MCF 10A (cell line): ENCODE measurements at regions of chr5 and their contacts with region 1.

Region 1: DNA sequence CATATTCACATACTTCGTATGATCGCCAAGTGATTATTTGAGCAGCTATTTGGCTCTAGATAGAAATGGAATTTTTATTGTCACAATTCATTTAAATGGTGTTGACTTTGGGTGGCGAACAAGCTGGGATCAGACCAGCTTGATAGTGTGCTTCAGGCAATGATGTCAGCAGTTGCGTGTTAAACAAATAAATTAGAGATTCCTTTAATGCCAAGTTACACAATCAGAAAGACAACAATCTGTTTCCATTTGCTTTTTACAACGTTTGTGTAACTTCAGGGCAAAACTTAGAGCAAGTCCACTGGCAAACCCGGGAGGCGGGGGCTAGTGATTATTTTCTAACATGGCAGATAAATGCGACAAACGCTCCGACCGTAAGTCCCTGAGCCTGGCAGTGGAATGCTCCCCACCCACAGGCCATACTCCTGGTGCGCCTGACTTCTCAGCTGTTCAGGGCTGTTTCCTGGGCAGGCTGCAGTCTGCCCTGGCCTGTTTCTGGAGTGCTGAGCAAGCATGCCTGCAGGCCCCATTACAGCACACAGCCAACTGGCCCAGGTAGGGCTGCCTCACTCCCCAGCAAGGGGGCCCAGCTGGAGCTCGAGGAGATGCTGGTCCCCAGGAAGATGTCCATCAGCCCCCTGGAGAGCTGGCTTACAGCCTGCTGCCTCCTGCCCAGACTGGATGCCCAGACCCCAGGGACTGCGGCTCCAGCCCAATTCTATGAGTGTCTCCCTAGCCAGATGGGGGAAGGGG is 88.7 kb downstream of the BASP1 start:
- DNase-seq: peak; percentile 89
- H3K4me3 Mint-ChIP-seq: peak overlapping the region; percentile 33
- H3K27ac Mint-ChIP-seq: peak overlapping the region; percentile 83
- H3K4me1 Mint-ChIP-seq: peaks cover 29% of the 10 kb centered on the region
- H3K27me3 Mint-ChIP-seq: no peaks in the 10 kb centered on the region
- CTCF ChIP-seq: no peak

Region 2: GRCh38 chr5:16992006-16992405 is 314.1 kb before region 1 on chr5:
- CTCF ChIA-PET with region 1: no interaction called
- POLR2A ChIA-PET with region 1: no interaction called
- intact Hi-C with region 1: no loop called
- DNase-seq: peak; percentile 20
- H3K4me3 Mint-ChIP-seq: no peak overlapping the region
- H3K27ac Mint-ChIP-seq: peak overlapping the region; percentile 57
- H3K4me1 Mint-ChIP-seq: peaks cover 15% of the 10 kb centered on the region
- H3K27me3 Mint-ChIP-seq: no peaks in the 10 kb centered on the region
- CTCF ChIP-seq: no peak

Region 3: GRCh38 chr5:17275279-17276158 is 30.6 kb before region 1 on chr5:
- CTCF ChIA-PET with region 1: no interaction called
- POLR2A ChIA-PET with region 1: no interaction called
- intact Hi-C with region 1: no loop called
- DNase-seq: no peak
- H3K4me3 Mint-ChIP-seq: no peak overlapping the region
- H3K27ac Mint-ChIP-seq: no peak overlapping the region
- H3K4me1 Mint-ChIP-seq: no peaks in the 10 kb centered on the region
- H3K27me3 Mint-ChIP-seq: no peaks in the 10 kb centered on the region
- CTCF ChIP-seq: no peak

Region 4: DNA sequence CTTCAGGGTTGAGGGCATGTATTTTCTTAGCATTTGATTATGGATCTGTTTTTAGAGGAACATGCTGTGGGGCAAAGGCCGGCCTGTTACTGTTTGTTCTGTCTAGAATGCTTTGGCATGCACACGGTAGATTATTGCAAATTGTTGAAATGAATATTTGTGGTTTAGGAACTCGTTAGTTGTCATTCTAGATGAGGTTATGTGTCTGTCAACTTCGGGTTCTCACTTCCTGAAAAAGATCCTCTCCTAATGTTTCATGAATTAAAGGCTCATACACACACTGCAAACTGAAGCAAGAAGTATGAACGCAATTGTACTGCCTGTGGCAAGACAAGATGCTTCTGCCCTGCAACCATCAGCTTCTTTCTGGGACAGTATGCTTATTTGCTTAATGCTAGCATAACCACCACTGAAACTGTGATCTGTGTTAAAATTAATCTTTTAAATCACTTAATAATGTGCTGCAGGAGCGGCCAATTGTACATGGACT is 10.9 kb after region 1 on chr5:
- CTCF ChIA-PET with region 1: no interaction called
- POLR2A ChIA-PET with region 1: interaction called, 15 read pairs
- intact Hi-C with region 1: no loop called
- DNase-seq: peak; percentile 62
- H3K4me3 Mint-ChIP-seq: peak overlapping the region; percentile 18
- H3K27ac Mint-ChIP-seq: peak overlapping the region; percentile 60
- H3K4me1 Mint-ChIP-seq: peaks cover 35% of the 10 kb centered on the region
- H3K27me3 Mint-ChIP-seq: no peaks in the 10 kb centered on the region
- CTCF ChIP-seq: no peak